Activated T-helper 2 cell treated with anti-CD3 and anti-CD28 coated beads, Interferon-gamma antibody, Interleukin-2, Interleukin-4, amounts not matched to agents 10 μg/mL and 5 μg/mL and 100 μg/mL, durations not matched to agents 14 hours and 24 hours and 36 hours (primary cell): ENCODE measurements at regions of chr2 and their contacts with region 1.

Region 1: GRCh38 chr2:168490015-168490874 is 34.2 kb downstream of the CERS6 start:
- DNase-seq: peak; percentile 28
- H3K4me3 Mint-ChIP-seq: peak overlapping the region; percentile 74
- H3K27ac Mint-ChIP-seq: peak overlapping the region; percentile 90
- H3K4me1 Mint-ChIP-seq: peaks cover 50% of the 10 kb centered on the region
- H3K27me3 Mint-ChIP-seq: no peaks in the 10 kb centered on the region

Region 2: DNA sequence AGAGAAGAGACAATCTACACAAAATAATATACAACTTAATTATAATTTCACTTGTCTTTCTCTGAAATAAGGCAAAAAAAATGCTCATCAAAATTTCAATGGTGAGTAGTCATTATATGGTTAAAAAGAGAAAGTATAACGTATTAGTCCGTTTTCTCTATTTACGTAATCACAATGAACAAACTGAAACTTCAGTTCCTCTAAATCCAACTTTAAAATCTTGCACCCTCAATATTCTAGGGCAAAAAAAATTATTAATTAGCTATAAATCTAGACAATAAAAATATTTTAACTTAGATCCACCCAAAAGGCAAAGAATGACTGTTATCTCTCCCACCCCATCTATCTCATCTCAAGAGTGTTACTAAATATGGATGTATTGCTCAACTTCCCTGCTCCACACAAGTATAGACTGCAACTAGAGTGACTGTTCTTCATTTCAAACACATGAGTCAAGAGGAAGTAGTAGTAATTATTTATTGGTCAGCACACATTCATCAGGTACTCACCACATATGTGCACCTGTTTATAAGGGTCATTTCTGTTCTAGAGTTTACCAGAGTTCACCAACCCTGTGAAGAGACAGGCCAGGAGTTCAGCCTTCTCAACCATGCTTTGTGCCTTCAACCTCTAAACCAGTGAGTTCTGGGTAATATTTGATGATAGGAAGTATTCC is 279.2 kb before region 1 on chr2:
- intact Hi-C with region 1: loop called (anchors 1 kb)
- DNase-seq: no peak
- H3K4me3 Mint-ChIP-seq: peak overlapping the region; percentile 24
- H3K27ac Mint-ChIP-seq: peak overlapping the region; percentile 96
- H3K4me1 Mint-ChIP-seq: peaks cover 64% of the 10 kb centered on the region
- H3K27me3 Mint-ChIP-seq: no peaks in the 10 kb centered on the region

Region 3: DNA sequence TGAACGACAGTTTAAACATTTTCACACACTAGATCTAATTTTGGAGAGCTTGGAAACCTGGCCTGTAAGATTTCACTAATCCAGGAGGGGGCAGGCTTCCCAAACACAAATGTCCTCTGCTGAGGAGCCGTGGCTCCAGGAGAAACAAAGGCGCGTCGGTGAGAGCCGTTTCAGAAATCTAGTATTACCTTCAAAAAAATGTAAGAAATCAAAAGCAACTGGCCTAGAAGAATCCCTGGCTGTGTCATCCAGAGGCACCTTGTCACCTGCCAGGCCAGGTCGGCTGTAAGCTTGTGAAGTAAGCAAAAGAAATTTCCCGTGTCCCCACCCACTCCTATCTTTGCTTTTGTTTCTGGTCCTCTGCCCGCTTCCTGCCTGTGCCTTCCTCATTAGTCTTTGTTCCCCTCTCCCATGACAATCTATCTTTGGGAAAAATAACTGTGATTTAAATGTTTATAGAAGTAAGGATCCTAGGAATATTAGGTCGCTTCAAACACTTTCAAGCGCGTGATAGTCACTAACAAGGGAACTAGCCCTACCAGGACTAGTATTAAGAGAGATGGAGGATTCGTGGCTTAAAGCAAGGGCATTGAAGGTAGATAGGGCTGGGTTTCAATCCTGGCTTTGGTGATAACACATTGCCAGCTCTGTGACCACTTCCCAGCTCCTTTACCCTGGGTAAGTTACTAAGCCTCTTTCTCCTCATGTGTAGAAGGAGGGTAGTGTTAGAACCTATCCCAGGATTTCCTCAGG is 143.3 kb before region 1 on chr2:
- intact Hi-C with region 1: loop called (anchors 5 kb)
- DNase-seq: peak; percentile 53
- H3K4me3 Mint-ChIP-seq: peak overlapping the region; percentile 81
- H3K27ac Mint-ChIP-seq: no peak overlapping the region
- H3K4me1 Mint-ChIP-seq: peaks cover 4% of the 10 kb centered on the region
- H3K27me3 Mint-ChIP-seq: peaks cover 19% of the 10 kb centered on the region

Region 4: DNA sequence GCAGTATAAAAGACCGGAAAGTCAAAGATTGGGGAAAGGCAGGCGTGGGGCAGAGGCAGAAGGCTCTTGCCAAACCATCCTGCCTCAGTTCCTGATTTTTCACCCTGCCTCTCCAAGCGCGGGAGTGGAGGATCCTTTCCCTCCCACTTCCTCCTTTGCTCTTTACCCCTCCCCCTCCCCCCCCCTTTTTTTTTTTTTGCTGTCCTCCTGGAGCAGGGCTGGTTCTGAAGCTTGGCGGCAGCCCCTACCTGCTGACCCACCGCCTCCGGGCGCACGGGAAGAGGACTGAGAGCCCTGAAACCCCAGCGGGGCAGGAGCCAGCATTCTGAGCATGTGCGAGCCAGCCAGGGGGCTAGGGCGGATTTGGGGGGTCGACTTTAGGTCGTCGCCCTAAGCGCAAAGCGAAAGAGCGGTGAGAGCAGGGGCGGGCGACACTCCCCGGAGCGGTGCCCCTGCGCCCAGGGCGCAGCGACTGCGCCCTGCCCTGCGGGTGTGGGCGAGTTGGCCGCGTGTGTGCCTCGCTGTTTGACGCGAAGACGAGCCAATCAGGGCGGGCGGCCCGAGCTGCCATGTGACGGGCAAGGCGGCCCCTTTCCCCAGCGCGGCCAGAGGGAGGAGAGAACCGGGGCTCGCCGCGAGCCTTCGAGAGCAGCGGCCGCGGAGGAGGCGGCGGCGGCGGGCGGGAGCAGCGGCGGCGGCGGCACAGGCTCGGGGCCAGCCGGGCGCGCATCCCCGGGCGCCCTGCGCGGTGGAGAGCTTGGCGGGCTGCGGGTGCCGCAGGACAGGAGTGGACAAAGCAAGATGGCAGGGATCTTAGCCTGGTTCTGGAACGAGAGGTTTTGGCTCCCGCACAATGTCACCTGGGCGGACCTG is 34.4 kb before region 1 on chr2 and contains the start of gene CERS6:
- intact Hi-C with region 1: loop called (anchors 1 kb)
- DNase-seq: peak; percentile 84
- H3K4me3 Mint-ChIP-seq: no peak within 1 kb of the TSS
- H3K27ac Mint-ChIP-seq: peak within 1 kb of the TSS; percentile 60
- H3K4me1 Mint-ChIP-seq: peaks cover 33% of the 10 kb centered on the region
- H3K27me3 Mint-ChIP-seq: no peaks in the 10 kb centered on the region
- total RNA-seq, gene CERS6: 21.5 and 22.4 TPM in 2 replicates

Region 5: DNA sequence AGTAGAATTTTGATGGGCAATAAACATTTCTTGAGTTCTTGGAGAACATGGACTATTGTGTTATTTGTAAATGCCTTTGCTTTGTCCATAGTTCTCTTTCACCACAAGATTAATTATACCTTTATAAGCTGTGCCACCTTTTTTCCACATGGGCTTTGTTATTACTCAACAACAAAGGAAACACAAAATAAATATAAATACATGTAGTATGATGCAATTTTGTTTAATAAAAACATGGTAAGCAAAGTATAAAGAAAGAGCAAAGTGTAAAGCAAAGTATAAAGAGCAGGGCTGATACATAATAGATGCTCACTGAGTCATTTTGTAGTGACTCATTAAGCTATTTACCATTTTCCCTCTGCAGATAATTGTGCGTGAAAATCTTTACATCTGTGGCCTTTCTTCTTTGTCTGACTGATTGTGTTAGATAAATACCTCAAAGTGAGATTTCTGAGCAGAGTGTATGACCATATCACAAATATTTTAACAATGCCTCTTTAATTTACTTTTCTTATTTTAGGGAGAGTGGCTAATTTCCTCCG is 46.8 kb after region 1 on chr2:
- intact Hi-C with region 1: loop called (anchors 1 kb)
- DNase-seq: no peak
- H3K4me3 Mint-ChIP-seq: no peak overlapping the region
- H3K27ac Mint-ChIP-seq: peak overlapping the region; percentile 33
- H3K4me1 Mint-ChIP-seq: peaks cover 49% of the 10 kb centered on the region
- H3K27me3 Mint-ChIP-seq: no peaks in the 10 kb centered on the region

Region 6: GRCh38 chr2:168687314-168687713 is 197.1 kb after region 1 on chr2:
- intact Hi-C with region 1: loop called (anchors 2 kb)
- DNase-seq: no peak
- H3K4me3 Mint-ChIP-seq: no peak overlapping the region
- H3K27ac Mint-ChIP-seq: no peak overlapping the region
- H3K4me1 Mint-ChIP-seq: peaks cover 18% of the 10 kb centered on the region
- H3K27me3 Mint-ChIP-seq: no peaks in the 10 kb centered on the region

Region 7: DNA sequence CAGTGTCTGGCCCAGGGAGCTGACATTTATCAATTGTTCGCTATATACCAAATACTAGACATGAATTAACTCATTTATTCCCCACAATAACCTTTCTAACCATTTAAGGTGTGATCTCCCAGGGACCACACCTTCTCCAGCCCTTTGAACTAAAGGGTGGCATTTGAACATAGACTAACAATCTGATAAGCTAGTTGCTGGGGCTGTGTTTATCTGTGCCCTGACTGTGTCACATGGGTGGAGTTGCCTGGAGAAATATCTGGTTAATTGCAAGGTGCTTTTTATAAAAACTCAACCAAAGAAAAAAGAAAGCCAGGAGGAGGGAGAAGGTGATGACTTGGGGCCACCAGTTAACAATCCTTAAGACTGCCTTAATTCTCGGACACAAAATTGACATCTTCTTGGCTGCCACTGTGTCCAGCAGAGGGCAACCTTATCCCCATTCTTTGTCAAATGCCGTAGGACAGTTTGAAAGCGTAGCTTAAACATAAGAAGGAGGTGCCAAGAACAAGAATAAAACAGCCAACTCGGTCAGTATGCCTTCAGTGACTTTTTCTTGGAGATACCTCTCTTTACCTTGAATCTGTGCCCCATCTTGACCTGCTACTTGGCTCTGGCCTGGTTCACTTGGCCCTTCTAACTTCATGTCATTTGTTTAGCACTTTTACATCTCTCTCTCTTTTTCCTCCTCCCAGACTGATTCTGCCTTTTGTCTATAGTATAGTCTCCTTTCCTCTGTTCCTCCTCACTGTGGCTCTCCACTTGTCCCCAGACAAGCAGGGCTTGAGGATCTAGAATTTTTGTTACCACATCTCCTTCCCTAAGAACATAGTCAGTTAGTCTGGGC is 1871.1 kb after region 1 on chr2:
- intact Hi-C with region 1: loop called (anchors 10 kb)
- DNase-seq: peak; percentile 61
- H3K4me3 Mint-ChIP-seq: peak overlapping the region; percentile 77
- H3K27ac Mint-ChIP-seq: peak overlapping the region; percentile 100
- H3K4me1 Mint-ChIP-seq: peaks cover 60% of the 10 kb centered on the region
- H3K27me3 Mint-ChIP-seq: no peaks in the 10 kb centered on the region